ENCODE measurements at regions of chr4 and their contacts with region 1.

Region 1: GRCh38 chr4:70704331-70705145 is 16.2 kb downstream of the UTP3 start:
- DNase-seq: peak; percentile 19 to 80 (median 57)
- ATAC-seq: peak; percentile 43 to 51
- H3K4me3 Mint-ChIP-seq: peak overlapping the region; percentile 90 to 99 (median 95)
- H3K27ac Mint-ChIP-seq: peak overlapping the region; percentile 71 to 98 (median 94)
- H3K4me1 Mint-ChIP-seq: peaks cover 16 to 38% (median 31%) of the 10 kb centered on the region in 4 donors
- H3K27me3 Mint-ChIP-seq: no peaks in the 10 kb centered on the region

Region 2: DNA sequence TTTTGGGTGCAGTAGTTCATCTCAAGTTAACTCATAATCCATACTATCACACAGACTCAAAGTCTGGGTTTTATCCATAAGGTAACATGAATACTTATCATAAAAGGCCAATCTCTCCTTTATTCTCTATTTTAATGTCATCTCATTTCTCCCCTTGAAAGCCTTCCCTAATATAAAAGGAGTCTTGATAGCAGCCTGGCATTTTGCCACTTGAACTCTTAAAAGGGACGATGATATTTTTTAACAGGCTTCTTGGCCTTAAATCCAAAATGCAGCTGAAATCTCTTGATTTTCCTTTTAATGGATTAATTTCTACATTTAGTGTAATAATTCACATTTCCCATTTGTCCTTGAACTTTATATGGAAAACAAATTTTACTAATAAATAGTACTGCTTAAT is 29.8 kb before region 1 on chr4:
- POLR2A ChIA-PET with region 1: no interaction called
- DNase-seq: no peak
- ATAC-seq: no peak
- H3K4me3 Mint-ChIP-seq: no peak overlapping the region
- H3K27ac Mint-ChIP-seq: no peak overlapping the region
- H3K4me1 Mint-ChIP-seq: peaks cover 6 to 43% (median 26%) of the 10 kb centered on the region in 4 donors
- H3K27me3 Mint-ChIP-seq: peaks cover 0 to 2% (median 0%) of the 10 kb centered on the region in 5 donors

Region 3: GRCh38 chr4:70687821-70688794 is 16.4 kb before region 1 on chr4 and contains the start of gene UTP3:
- POLR2A ChIA-PET with region 1: interaction called, 109 read pairs
- DNase-seq: peak; percentile 87 to 95 (median 91)
- ATAC-seq: peak; percentile 87 to 91
- H3K4me3 Mint-ChIP-seq: peak within 1 kb of the TSS; percentile 95 to 100 (median 98)
- H3K27ac Mint-ChIP-seq: peak within 1 kb of the TSS; percentile 98 to 100 (median 99)
- H3K4me1 Mint-ChIP-seq: peaks cover 19 to 52% (median 40%) of the 10 kb centered on the region in 4 donors
- H3K27me3 Mint-ChIP-seq: no peaks in the 10 kb centered on the region
- polyA plus RNA-seq, gene UTP3: 9.7 to 20.3 (median 13.9) TPM

Region 4: GRCh38 chr4:70721747-70722146 is 17.2 kb after region 1 on chr4 and contains the start of gene RUFY3:
- POLR2A ChIA-PET with region 1: interaction called, 16 read pairs
- DNase-seq: no peak
- ATAC-seq: no peak
- H3K4me3 Mint-ChIP-seq: peak within 1 kb of the TSS; percentile 3 to 65 (median 50)
- H3K27ac Mint-ChIP-seq: peak within 1 kb of the TSS; percentile 25 to 90 (median 80)
- H3K4me1 Mint-ChIP-seq: peaks cover 8 to 31% (median 25%) of the 10 kb centered on the region in 4 donors
- H3K27me3 Mint-ChIP-seq: no peaks in the 10 kb centered on the region
- polyA plus RNA-seq, gene RUFY3: 8.4 to 9.3 (median 8.6) TPM

Region 5: GRCh38 chr4:70728091-70728490 is 23.6 kb after region 1 on chr4:
- POLR2A ChIA-PET with region 1: interaction called, 124 read pairs
- DNase-seq: no peak
- ATAC-seq: no peak
- H3K4me3 Mint-ChIP-seq: peak overlapping the region in 1 of 10 donors; percentile 41
- H3K27ac Mint-ChIP-seq: peak overlapping the region in 1 of 10 donors; percentile 27
- H3K4me1 Mint-ChIP-seq: peaks cover 6 to 21% (median 12%) of the 10 kb centered on the region in 4 donors
- H3K27me3 Mint-ChIP-seq: no peaks in the 10 kb centered on the region

Region 6: DNA sequence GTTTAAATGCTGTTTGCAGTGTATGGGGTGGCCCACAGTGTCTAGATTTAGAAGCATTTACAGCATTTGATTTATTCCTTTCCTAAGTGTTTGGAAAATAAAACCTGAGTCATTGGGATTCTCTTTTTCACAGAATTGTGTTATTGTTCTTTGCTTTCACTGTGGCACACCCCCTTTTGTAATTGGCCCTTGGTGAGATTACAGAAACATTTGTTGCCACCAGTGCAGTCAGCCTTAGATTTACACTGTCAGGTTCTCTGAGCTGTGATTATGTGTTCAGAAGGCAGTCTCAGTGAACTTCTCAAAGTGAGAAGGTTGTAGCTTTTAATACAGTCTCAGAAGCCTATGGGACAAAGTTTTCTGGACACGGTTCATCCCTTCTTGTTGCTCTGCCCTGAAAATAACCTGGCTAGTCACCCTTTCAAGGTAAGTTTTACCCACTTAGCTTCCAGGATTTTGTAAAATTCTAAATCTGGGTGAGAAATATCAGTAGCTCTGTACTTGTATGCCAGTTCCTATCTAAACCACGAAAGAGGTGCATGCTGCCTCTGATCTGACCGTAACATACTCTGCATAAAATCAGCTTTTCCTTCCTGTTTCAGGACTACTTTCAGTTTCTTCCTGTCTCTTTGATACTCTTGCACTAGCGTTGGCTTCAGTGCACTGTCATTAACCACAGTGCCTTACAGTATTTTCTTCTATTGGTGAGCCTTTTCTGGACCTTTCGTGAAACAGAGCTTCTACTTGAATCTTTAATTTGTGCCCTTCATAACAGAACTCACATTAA is 29.8 kb after region 1 on chr4:
- POLR2A ChIA-PET with region 1: interaction called, 124 read pairs
- DNase-seq: peak in 9 of 10 donors; percentile 12 to 77 (median 45)
- ATAC-seq: peak; percentile 88 to 90
- H3K4me3 Mint-ChIP-seq: peak overlapping the region; percentile 66 to 81 (median 74)
- H3K27ac Mint-ChIP-seq: peak overlapping the region; percentile 51 to 93 (median 88)
- H3K4me1 Mint-ChIP-seq: peaks cover 15 to 53% (median 53%) of the 10 kb centered on the region in 4 donors
- H3K27me3 Mint-ChIP-seq: no peaks in the 10 kb centered on the region

Region 7: GRCh38 chr4:70839589-70840093 is 135.1 kb after region 1 on chr4 and contains the start of gene GRSF1:
- POLR2A ChIA-PET with region 1: interaction called, 28 read pairs
- DNase-seq: peak; percentile 93 to 97 (median 94)
- ATAC-seq: peak; percentile 82 to 86
- H3K4me3 Mint-ChIP-seq: peak within 1 kb of the TSS; percentile 94 to 99 (median 97)
- H3K27ac Mint-ChIP-seq: peak within 1 kb of the TSS; percentile 91 to 98 (median 97)
- H3K4me1 Mint-ChIP-seq: peaks cover 8 to 48% (median 28%) of the 10 kb centered on the region in 4 donors
- H3K27me3 Mint-ChIP-seq: no peaks in the 10 kb centered on the region
- polyA plus RNA-seq, gene GRSF1: 71.8 to 96.6 (median 84.4) TPM